ENCODE measurements at regions of chr1 and their contacts with region 1.

Region 1: GRCh38 chr1:202926720-202927491 is at the start of gene KLHL12:
- DNase-seq: peak; percentile 99
- H3K4me3 Mint-ChIP-seq: peak within 1 kb of the TSS; percentile 95
- H3K27ac Mint-ChIP-seq: peak within 1 kb of the TSS; percentile 93
- H3K4me1 Mint-ChIP-seq: peaks cover 38% of the 10 kb centered on the region
- H3K27me3 Mint-ChIP-seq: no peaks in the 10 kb centered on the region
- CTCF ChIP-seq: peak; percentile 87
- total RNA-seq, gene KLHL12: 51.0 and 59.0 TPM in 2 replicates

Region 2: DNA sequence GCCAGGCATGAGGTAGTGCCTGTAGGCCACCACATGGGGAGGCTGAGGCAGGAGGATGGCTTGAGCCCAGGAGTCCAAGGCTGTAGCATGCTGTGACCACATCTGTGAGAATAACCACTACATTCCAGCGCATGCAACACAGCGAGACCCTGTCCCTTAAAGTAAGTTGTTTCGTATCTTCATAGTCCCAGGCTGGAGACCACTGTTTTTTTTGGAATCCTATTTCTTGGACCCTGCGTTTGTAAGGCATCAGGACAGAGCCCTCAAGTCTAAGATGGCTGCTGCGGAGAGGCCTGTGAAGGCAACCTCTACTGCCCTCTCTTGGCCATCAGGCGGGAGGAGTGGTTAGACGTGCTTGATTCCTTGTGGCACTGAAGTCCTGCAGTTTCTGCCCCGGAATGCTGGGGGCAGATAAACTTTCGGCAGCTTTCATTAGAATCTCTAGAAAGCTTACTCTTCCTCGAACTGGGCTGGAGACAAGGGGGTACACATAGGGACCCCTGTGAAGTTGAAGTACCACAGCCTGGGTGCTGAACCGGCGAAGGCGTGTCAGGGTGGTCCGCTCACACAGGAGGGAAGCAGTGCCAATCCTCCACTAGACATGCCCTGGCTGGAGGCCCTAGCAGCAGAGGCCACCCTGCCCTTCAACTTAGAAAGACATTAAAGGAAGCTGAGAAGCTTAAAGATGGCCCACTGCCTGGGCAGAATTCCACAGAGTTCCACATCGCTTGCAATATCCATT is 74.6 kb before region 1 on chr1:
- CTCF ChIA-PET with region 1: no interaction called
- POLR2A ChIA-PET with region 1: no interaction called
- intact Hi-C with region 1: no loop called
- DNase-seq: peak; percentile 88
- H3K4me3 Mint-ChIP-seq: no peak overlapping the region
- H3K27ac Mint-ChIP-seq: no peak overlapping the region
- H3K4me1 Mint-ChIP-seq: no peaks in the 10 kb centered on the region
- H3K27me3 Mint-ChIP-seq: no peaks in the 10 kb centered on the region
- CTCF ChIP-seq: peak; percentile 87

Region 3: GRCh38 chr1:202938287-202938925 is 11.5 kb after region 1 on chr1:
- CTCF ChIA-PET with region 1: interaction called, 6 read pairs
- POLR2A ChIA-PET with region 1: interaction called, 20 read pairs
- intact Hi-C with region 1: no loop called
- DNase-seq: no peak
- H3K4me3 Mint-ChIP-seq: no peak overlapping the region
- H3K27ac Mint-ChIP-seq: no peak overlapping the region
- H3K4me1 Mint-ChIP-seq: no peaks in the 10 kb centered on the region
- H3K27me3 Mint-ChIP-seq: peaks cover 16% of the 10 kb centered on the region
- CTCF ChIP-seq: no peak

Region 4: GRCh38 chr1:202944438-202944921 is 17.6 kb after region 1 on chr1:
- CTCF ChIA-PET with region 1: interaction called, 4 read pairs
- POLR2A ChIA-PET with region 1: interaction called, 20 read pairs
- intact Hi-C with region 1: no loop called
- DNase-seq: no peak
- H3K4me3 Mint-ChIP-seq: no peak overlapping the region
- H3K27ac Mint-ChIP-seq: no peak overlapping the region
- H3K4me1 Mint-ChIP-seq: no peaks in the 10 kb centered on the region
- H3K27me3 Mint-ChIP-seq: no peaks in the 10 kb centered on the region
- CTCF ChIP-seq: no peak

Region 5: GRCh38 chr1:202952818-202953217 is 25.9 kb after region 1 on chr1:
- CTCF ChIA-PET with region 1: interaction called, 8 read pairs
- POLR2A ChIA-PET with region 1: interaction called, 32 read pairs
- intact Hi-C with region 1: loop called (anchors 2 kb)
- DNase-seq: peak; percentile 93
- H3K4me3 Mint-ChIP-seq: peak overlapping the region; percentile 48
- H3K27ac Mint-ChIP-seq: peak overlapping the region; percentile 65
- H3K4me1 Mint-ChIP-seq: peaks cover 55% of the 10 kb centered on the region
- H3K27me3 Mint-ChIP-seq: no peaks in the 10 kb centered on the region
- CTCF ChIP-seq: no peak

Region 6: DNA sequence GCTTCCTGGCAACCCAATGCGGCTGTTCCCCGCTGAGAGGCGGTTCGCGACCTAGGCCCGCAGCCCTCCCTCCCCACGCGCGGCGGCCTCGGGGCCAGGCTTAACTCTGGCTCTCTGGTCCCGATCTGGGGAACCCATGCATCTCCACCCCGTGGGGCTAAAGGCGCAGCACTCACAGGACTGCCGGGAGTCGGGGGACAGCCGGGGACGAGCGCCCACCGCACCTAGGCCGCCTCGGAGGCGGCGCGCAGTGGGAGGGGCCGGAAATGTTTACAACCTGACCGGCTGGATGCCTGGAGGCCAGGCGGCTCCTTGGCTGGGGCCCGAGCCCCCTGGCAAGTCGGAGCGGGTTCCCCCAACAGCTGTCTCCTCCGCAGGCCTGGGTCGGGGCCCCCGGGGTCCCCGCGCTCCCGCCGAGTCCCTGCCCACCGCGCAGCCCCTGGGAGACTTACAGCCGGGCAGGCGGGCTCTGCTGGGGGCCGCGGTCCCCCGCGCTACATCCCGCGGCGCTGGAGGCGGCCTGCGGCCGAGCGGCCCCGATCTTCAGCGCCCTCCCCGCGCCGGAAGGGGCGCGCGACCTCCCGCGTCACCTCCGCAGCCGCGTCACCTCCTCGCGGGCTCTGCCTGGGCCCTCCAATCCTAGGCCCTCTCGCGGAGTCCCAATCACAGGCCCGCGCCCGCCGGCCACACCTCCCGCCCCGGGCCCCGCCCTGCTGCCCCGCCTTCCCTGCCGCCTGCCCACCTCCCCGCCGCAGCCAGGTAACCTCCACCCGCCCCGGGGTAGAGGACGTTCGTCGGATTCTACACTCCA is 31.0 kb after region 1 on chr1 and contains the start of gene ADIPOR1:
- CTCF ChIA-PET with region 1: interaction called, 8 read pairs
- POLR2A ChIA-PET with region 1: interaction called, 32 read pairs
- intact Hi-C with region 1: loop called (anchors 2 kb)
- DNase-seq: peak; percentile 96
- H3K4me3 Mint-ChIP-seq: peak within 1 kb of the TSS; percentile 75
- H3K27ac Mint-ChIP-seq: peak within 1 kb of the TSS; percentile 65
- H3K4me1 Mint-ChIP-seq: peaks cover 60% of the 10 kb centered on the region
- H3K27me3 Mint-ChIP-seq: no peaks in the 10 kb centered on the region
- CTCF ChIP-seq: peak; percentile 19
- total RNA-seq, gene ADIPOR1: 157 and 168 TPM in 2 replicates

Region 7: DNA sequence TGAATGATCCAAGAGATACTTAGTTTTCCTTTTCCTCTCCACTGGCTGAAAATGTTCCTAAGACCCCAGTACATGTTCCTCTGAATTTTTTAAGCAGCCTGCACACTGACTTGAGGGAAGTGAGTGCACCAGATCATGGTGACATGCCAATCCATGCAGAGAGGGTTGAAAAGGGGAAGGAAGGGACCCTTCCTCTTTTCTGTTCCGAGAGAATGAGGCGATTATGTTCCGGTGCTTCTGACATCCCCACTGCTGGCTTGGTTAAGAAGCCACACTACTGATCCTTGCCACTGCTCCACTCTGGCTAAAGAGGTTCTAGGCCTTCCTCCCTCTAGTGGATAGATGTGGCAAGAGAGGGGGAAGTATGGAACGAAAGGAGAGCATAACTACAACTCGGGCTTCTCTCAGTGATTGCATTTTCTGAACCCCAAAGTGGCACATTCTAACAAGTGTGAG is 42.0 kb after region 1 on chr1:
- CTCF ChIA-PET with region 1: interaction called, 4 read pairs
- POLR2A ChIA-PET with region 1: interaction called, 15 read pairs
- intact Hi-C with region 1: loop called (anchors 1 kb)
- DNase-seq: peak; percentile 85
- H3K4me3 Mint-ChIP-seq: no peak overlapping the region
- H3K27ac Mint-ChIP-seq: no peak overlapping the region
- H3K4me1 Mint-ChIP-seq: peaks cover 29% of the 10 kb centered on the region
- H3K27me3 Mint-ChIP-seq: peaks cover 3% of the 10 kb centered on the region
- CTCF ChIP-seq: peak; percentile 79

Region 8: GRCh38 chr1:203017692-203018091 is 90.8 kb after region 1 on chr1:
- CTCF ChIA-PET with region 1: no interaction called
- POLR2A ChIA-PET with region 1: no interaction called
- intact Hi-C with region 1: no loop called
- DNase-seq: no peak
- H3K4me3 Mint-ChIP-seq: no peak overlapping the region
- H3K27ac Mint-ChIP-seq: no peak overlapping the region
- H3K4me1 Mint-ChIP-seq: no peaks in the 10 kb centered on the region
- H3K27me3 Mint-ChIP-seq: no peaks in the 10 kb centered on the region
- CTCF ChIP-seq: no peak